H1 (cell line): ENCODE measurements at regions of chr1 and their contacts with region 1.

Region 1: GRCh38 chr1:207868774-207869721 is 41.9 kb downstream of the CD34 start:
- DNase-seq: peak; percentile 29 to 90
- H3K4me3 ChIP-seq: peak overlapping the region; percentile 34 to 68 (median 50)
- H3K27ac ChIP-seq: no peak overlapping the region
- H3K4me1 ChIP-seq: peaks cover 0 to 8% (median 5%) of the 10 kb centered on the region in 4 experiments; a peak in 6 of 7 replicates
- H3K27me3 ChIP-seq: peaks cover 0 to 23% (median 8%) of the 10 kb centered on the region in 4 experiments; a peak in 6 of 7 replicates
- CTCF ChIP-seq: peak; percentile 69 to 82 (median 72)
- EP300 ChIP-seq: peak in 1 of 2 experiments; percentile 81; a peak in 1 of 3 replicates
- POLR2A ChIP-seq: no peak
- RAD21 ChIP-seq: peak; percentile 25 to 61

Region 2: GRCh38 chr1:207853372-207853757 is 15.7 kb before region 1 on chr1:
- CTCF ChIA-PET with region 1: interaction called, 15 read pairs
- POLR2A ChIA-PET with region 1: interaction called, 3 read pairs
- DNase-seq: no peak
- H3K4me3 ChIP-seq: no peak overlapping the region
- H3K27ac ChIP-seq: no peak overlapping the region
- H3K4me1 ChIP-seq: peaks cover 0 to 3% (median 0%) of the 10 kb centered on the region in 4 experiments; a peak in 1 of 7 replicates
- H3K27me3 ChIP-seq: no peaks in the 10 kb centered on the region
- CTCF ChIP-seq: no peak
- EP300 ChIP-seq: no peak
- POLR2A ChIP-seq: no peak
- RAD21 ChIP-seq: no peak

Region 3: GRCh38 chr1:207858806-207859205 is 10.2 kb before region 1 on chr1:
- CTCF ChIA-PET with region 1: interaction called, 15 read pairs
- POLR2A ChIA-PET with region 1: no interaction called
- DNase-seq: no peak
- H3K4me3 ChIP-seq: no peak overlapping the region
- H3K27ac ChIP-seq: no peak overlapping the region
- H3K4me1 ChIP-seq: peaks cover 0 to 3% (median 0%) of the 10 kb centered on the region in 4 experiments; a peak in 2 of 7 replicates
- H3K27me3 ChIP-seq: no peaks in the 10 kb centered on the region
- CTCF ChIP-seq: no peak
- EP300 ChIP-seq: no peak
- POLR2A ChIP-seq: no peak
- RAD21 ChIP-seq: no peak